ENCODE measurements at regions of chr3 and their contacts with region 1.

Region 1: DNA sequence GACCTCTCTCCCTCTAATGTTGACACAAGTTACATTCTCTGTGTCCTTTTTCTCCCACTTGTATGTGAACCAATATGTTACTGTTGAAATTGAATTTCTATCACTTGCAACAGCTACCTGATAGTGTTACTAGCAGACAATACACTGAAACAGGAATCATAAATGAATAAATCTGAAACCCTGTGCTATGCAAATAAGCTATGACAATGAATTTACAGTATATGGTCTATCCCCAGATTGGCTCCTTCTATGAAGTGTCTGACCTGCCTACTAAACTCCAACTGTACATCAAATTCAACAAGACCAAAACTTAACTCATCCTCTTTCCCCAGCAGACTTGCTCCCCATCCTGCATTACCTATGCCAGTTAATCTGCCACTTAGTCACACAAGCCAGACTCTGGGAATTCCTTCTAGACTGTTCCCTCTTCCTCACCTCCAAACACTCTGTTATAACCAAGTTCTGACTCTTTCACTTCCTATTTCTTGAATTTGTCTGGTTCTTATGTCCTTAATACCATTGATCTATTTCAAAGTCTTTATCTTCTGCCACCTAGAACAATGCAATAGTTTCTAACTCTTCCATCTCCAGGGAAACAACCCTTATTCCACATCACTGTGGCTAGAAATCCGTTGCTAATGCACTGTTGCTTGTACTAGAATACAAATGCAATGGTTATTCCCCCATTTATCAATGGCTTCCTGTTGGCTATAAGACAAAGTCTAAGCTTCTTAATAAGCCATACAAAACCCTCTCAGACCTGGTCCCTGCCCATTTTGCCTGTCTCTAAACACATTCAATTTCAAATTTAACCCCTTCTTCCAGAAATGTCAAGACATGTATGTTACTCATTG is 13.4 kb upstream of the ZNF639 start:
- DNase-seq: no peak
- ATAC-seq: no peak
- H3K4me3 ChIP-seq: no peak overlapping the region
- H3K27ac ChIP-seq: no peak overlapping the region
- H3K4me1 ChIP-seq: no peaks in the 10 kb centered on the region
- H3K27me3 ChIP-seq: no peaks in the 10 kb centered on the region
- CTCF ChIP-seq: no peak
- POLR2A ChIP-seq: no peak

Region 2: GRCh38 chr3:177713928-177714900 is 1595.2 kb before region 1 on chr3:
- in situ Hi-C with region 1: no loop called
- intact Hi-C with region 1: no loop called
- DNase-seq: no peak
- ATAC-seq: peak; percentile 24 to 32
- H3K4me3 ChIP-seq: no peak overlapping the region
- H3K27ac ChIP-seq: no peak overlapping the region
- H3K4me1 ChIP-seq: peaks cover 15 to 16% of the 10 kb centered on the region in 2 donors
- H3K27me3 ChIP-seq: no peaks in the 10 kb centered on the region
- CTCF ChIP-seq: no peak
- POLR2A ChIP-seq: no peak

Region 3: GRCh38 chr3:179100652-179101051 is 208.8 kb before region 1 on chr3:
- in situ Hi-C with region 1: no loop called
- intact Hi-C with region 1: loop called (anchors 10 kb)
- DNase-seq: no peak
- ATAC-seq: no peak
- H3K4me3 ChIP-seq: no peak overlapping the region
- H3K27ac ChIP-seq: no peak overlapping the region
- H3K4me1 ChIP-seq: no peaks in the 10 kb centered on the region
- H3K27me3 ChIP-seq: no peaks in the 10 kb centered on the region
- CTCF ChIP-seq: no peak
- POLR2A ChIP-seq: no peak

Region 4: DNA sequence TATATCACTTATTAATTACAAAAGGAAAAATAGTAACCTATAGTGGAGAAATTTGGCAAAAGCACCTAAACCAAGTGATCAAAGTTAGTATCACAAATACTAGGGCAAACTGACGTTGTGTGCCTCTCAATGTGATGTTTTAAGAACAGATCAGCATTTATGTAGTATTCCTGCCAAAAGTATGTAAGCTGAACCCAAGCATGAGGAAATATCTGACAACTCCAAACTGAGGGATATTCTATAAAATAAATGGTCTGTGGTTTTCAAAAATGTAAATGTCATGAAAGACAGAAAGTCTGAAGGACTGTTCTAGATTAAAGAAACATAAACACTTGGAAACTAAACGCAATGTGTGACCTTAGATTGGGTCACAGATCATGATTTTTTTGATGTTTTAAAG is 195.5 kb before region 1 on chr3:
- in situ Hi-C with region 1: loop called in 1 of 4 experiments (anchors 10 kb)
- intact Hi-C with region 1: loop called (anchors 10 kb)
- DNase-seq: no peak
- ATAC-seq: no peak
- H3K4me3 ChIP-seq: no peak overlapping the region
- H3K27ac ChIP-seq: no peak overlapping the region
- H3K4me1 ChIP-seq: no peaks in the 10 kb centered on the region
- H3K27me3 ChIP-seq: no peaks in the 10 kb centered on the region
- CTCF ChIP-seq: no peak
- POLR2A ChIP-seq: no peak

Region 5: GRCh38 chr3:179141890-179142289 is 167.6 kb before region 1 on chr3:
- in situ Hi-C with region 1: loop called in 2 of 4 experiments (anchors 5 to 10 kb)
- intact Hi-C with region 1: no loop called
- DNase-seq: no peak
- ATAC-seq: no peak
- H3K4me3 ChIP-seq: no peak overlapping the region
- H3K27ac ChIP-seq: no peak overlapping the region
- H3K4me1 ChIP-seq: peaks cover 0 to 3% of the 10 kb centered on the region in 2 donors
- H3K27me3 ChIP-seq: no peaks in the 10 kb centered on the region
- CTCF ChIP-seq: no peak
- POLR2A ChIP-seq: no peak

Region 6: DNA sequence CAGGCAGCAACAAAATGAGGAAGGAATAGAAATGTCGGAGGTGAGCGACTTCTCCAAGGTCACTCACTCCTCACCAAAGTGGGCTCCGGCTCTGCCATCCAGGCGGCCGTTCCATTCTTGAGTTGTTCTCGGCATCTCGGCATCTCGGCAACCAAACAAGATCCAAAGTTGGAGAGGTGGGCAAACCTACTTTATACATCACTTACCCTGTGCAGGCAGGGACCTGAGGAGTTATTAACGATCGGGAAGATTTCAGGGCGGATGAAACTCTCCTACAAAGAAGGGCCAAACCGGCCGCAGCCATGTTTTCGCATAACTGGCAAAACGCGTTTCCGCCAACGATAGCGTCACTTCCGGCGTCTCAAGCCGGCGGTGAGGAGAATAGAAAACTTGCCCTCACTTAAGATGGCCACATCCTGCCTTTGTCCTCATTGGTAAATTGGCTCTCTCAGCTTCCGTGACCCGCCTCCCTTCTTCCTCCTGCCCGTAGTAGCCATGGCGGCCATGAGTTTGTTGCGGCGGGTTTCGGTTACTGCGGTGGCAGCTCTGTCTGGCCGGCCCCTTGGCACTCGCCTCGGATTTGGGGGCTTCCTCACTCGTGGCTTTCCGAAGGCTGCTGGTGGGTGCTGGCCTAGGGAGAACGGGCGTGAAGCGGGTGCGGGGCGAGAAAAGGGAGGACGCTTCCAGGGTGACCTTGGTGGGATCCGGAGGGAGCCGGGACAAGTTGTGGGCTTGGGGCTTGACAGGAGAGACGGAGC is 295.0 kb after region 1 on chr3 and contains the starts of genes MRPL47 and NDUFB5:
- in situ Hi-C with region 1: no loop called
- intact Hi-C with region 1: no loop called
- DNase-seq: peak; percentile 93 to 94
- ATAC-seq: peak; percentile 100
- H3K4me3 ChIP-seq: peak within 1 kb of the TSS; percentile 84 to 94 (median 88)
- H3K27ac ChIP-seq: peak within 1 kb of the TSS; percentile 90 to 97 (median 92)
- H3K4me1 ChIP-seq: peaks cover 30 to 40% of the 10 kb centered on the region in 2 donors
- H3K27me3 ChIP-seq: no peaks in the 10 kb centered on the region
- CTCF ChIP-seq: no peak
- POLR2A ChIP-seq: peak; percentile 80 to 88
- total RNA-seq, gene MRPL47: 34.9 to 74.0 (median 41.2) TPM
- total RNA-seq, gene NDUFB5: 127 to 348 (median 179) TPM

Measured in gastrocnemius medialis (tissue), 4 donors.